Heart right ventricle (tissue), 16 donors: ENCODE measurements at regions of chr7 and their contacts with region 1.

Region 1: DNA sequence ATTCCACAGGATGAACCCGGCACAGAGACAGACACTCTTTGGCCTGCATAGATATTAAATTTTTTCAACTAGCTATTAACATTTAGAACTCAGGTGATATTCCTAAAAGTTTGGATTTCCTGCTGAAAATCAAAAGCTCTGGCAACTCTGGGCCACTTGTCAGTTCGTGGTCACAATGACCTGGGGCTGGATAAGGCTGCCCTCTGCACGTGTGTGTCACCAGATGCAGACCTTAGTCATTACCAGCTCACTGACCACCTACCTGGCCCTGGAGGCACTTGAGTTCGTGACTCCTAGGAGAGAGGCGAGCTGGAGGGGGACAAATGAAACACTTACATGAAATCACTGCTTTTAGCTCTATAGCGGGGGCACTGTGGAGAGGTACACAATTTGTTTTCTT is 126.5 kb downstream of the HIPK2 start:
- DNase-seq: no peak
- ATAC-seq: peak in 2 of 8 donors; percentile 22 to 35
- H3K4me3 ChIP-seq: no peak overlapping the region
- H3K27ac ChIP-seq: peak overlapping the region; percentile 29 to 88 (median 80)
- H3K4me1 ChIP-seq: peaks cover 15 to 97% (median 91%) of the 10 kb centered on the region in 9 donors
- H3K27me3 ChIP-seq: no peaks in the 10 kb centered on the region
- CTCF ChIP-seq: no peak

Region 2: GRCh38 chr7:139393621-139394211 is 257.6 kb before region 1 on chr7:
- intact Hi-C with region 1: no loop called
- DNase-seq: no peak
- ATAC-seq: no peak
- H3K4me3 ChIP-seq: no peak overlapping the region
- H3K27ac ChIP-seq: no peak overlapping the region
- H3K4me1 ChIP-seq: peaks cover 0 to 18% (median 7%) of the 10 kb centered on the region in 9 donors
- H3K27me3 ChIP-seq: no peaks in the 10 kb centered on the region
- CTCF ChIP-seq: no peak

Region 3: GRCh38 chr7:139702811-139703486 is 51.6 kb after region 1 on chr7:
- intact Hi-C with region 1: loop called in 1 of 10 experiments (anchors 10 kb)
- DNase-seq: no peak
- ATAC-seq: peak in 7 of 8 donors; percentile 41 to 74 (median 66)
- H3K4me3 ChIP-seq: no peak overlapping the region
- H3K27ac ChIP-seq: peak overlapping the region; percentile 73 to 91 (median 84)
- H3K4me1 ChIP-seq: peaks cover 16 to 83% (median 58%) of the 10 kb centered on the region in 9 donors
- H3K27me3 ChIP-seq: no peaks in the 10 kb centered on the region
- CTCF ChIP-seq: no peak